Sigmoid colon (tissue), 7 donors: ENCODE measurements at regions of chr9 and their contacts with region 1.

Region 1: DNA sequence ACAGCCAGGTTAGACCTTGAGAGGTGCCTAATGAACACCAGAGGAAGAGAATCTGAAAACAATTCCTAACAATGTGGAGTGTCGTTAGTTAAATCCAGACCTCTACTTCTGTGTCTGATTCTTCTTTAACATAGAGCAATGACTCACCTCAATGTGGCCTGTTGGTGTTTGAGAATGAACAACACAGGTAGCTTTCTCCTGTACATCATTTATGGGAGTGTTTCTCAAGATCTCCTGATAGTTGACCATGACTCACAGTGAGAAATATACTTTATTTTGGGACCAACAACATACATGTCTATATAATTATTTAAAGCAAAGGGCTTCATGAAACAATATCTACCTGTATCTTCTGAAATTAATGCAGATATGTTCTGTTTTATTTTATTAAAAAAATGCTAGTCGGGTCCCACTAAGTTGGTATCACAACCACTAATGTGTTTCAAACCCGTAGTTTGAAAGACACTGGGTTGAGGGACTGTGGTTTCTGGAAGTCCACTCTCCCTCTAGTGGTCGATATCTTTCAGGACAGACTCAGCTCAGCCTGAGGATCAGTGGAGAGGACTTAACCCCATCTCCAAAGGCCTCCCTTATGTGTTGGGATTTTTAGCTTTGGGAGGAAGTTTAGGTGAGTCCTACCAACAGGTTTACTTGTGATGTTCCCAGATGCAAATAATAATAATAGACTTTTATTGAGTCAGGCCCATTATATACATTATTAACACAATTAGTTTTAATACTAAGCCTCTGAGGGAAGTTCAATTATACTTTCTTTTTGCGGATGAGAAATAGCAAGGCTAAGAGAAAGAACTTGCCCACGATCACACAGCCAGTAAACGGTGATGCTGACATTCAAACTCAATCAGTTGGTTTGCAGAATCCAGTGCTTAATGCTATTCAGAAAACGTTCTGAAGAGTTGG is 70.0 kb upstream of the KLF9 start:
- DNase-seq: peak; percentile 80
- H3K4me3 ChIP-seq: no peak overlapping the region
- H3K27ac ChIP-seq: peak overlapping the region; percentile 67 to 98 (median 92)
- H3K4me1 ChIP-seq: peaks cover 4 to 88% (median 76%) of the 10 kb centered on the region in 4 donors
- H3K27me3 ChIP-seq: no peaks in the 10 kb centered on the region
- CTCF ChIP-seq: peak in 3 of 4 experiments; percentile 73 to 85 (median 81)
- EP300 ChIP-seq: peak in 1 of 4 donors; percentile 15
- POLR2A ChIP-seq: no peak

Region 2: GRCh38 chr9:70053864-70054263 is 430.6 kb before region 1 on chr9:
- intact Hi-C with region 1: loop called (anchors 10 kb)
- DNase-seq: peak; percentile 66
- H3K4me3 ChIP-seq: no peak overlapping the region
- H3K27ac ChIP-seq: peak overlapping the region; percentile 87 to 98 (median 93)
- H3K4me1 ChIP-seq: peaks cover 0 to 100% (median 97%) of the 10 kb centered on the region in 4 donors
- H3K27me3 ChIP-seq: no peaks in the 10 kb centered on the region
- CTCF ChIP-seq: no peak
- EP300 ChIP-seq: no peak
- POLR2A ChIP-seq: no peak

Region 3: GRCh38 chr9:70152350-70152749 is 332.1 kb before region 1 on chr9:
- intact Hi-C with region 1: loop called (anchors 5 kb)
- DNase-seq: no peak
- H3K4me3 ChIP-seq: no peak overlapping the region
- H3K27ac ChIP-seq: peak overlapping the region; percentile 24 to 61 (median 37)
- H3K4me1 ChIP-seq: peaks cover 0 to 62% (median 43%) of the 10 kb centered on the region in 4 donors
- H3K27me3 ChIP-seq: no peaks in the 10 kb centered on the region
- CTCF ChIP-seq: no peak
- EP300 ChIP-seq: no peak
- POLR2A ChIP-seq: no peak

Region 4: DNA sequence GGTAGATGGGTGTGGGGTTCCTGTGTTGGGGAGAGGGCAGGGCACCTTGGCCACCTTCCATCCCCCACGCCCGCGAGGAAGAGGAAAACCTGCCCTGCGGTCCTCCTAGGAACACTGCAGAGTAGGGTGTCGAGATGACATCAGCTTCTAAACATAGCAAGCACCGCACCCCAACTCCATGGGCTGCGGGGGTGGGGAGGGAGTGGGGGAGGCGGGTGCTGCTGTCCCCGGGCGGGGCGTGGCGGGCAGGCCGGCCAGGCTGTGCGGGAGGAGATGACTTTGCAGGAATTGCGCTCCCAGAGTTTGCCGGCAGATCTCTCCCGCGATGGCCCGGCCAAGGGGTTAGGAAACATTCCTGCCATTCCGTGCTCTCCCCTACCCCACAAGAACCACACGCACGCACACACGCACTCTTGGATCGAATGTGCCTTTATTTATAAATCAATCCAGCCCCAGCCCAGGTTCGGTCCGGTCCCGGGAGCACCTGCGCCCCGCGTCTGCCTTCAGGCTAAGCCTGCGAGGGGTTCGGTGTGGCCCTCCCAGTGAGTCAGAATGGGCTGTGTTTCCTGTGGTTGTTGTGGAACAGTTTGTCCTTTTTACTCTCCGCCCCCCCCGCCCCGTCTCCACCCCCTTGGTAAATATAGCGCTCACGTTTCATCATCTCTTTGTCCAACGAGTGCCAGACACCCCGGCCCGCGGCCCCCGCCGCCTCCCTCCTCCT is 64.8 kb before region 1 on chr9:
- intact Hi-C with region 1: loop called (anchors 1 kb)
- DNase-seq: peak; percentile 99
- H3K4me3 ChIP-seq: peak overlapping the region; percentile 42 to 56 (median 51)
- H3K27ac ChIP-seq: peak overlapping the region; percentile 98 to 100 (median 99)
- H3K4me1 ChIP-seq: peaks cover 0 to 66% (median 57%) of the 10 kb centered on the region in 4 donors
- H3K27me3 ChIP-seq: no peaks in the 10 kb centered on the region
- CTCF ChIP-seq: peak in 2 of 4 experiments; percentile 6 to 21
- EP300 ChIP-seq: peak; percentile 87 to 99 (median 96)
- POLR2A ChIP-seq: peak in 1 of 2 donors; percentile 94

Region 5: DNA sequence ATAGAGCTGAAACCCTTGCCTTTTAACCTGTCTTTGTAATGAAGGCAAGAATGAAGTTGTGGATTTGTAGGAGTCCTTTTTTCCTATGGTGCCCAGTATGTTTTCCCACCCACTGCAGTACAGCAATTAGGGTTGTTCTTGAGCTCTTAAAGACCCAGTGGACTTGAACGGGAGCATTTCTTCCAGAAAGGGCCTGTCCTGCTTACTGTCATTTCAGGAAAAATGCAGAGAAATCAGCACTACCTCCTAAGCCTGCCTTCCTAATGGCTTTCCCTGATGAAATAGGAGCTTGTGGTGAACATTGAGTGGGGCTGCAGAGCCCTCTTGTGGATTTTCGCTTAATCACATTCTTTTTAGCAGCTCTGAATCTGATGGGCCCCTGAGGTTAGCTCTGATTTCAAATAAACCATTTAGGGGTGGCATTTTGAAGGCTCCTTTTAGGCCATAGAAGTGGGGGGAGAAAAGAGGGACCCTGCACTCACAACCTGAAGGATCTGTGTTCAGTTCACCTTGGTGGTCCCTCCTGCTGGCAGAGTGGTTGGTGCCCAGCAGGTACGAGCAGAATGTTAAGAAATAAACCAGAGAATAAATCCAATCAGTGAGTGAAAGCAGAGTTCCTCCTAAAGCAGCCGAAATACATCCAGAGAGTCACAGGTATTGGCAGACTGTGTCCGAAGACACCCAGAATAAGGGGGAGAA is 118.0 kb after region 1 on chr9:
- intact Hi-C with region 1: loop called (anchors 1 kb)
- DNase-seq: peak; percentile 85
- H3K4me3 ChIP-seq: peak overlapping the region in 3 of 4 donors; percentile 6 to 21 (median 20)
- H3K27ac ChIP-seq: peak overlapping the region; percentile 80 to 98 (median 89)
- H3K4me1 ChIP-seq: peaks cover 0 to 32% (median 28%) of the 10 kb centered on the region in 4 donors
- H3K27me3 ChIP-seq: no peaks in the 10 kb centered on the region
- CTCF ChIP-seq: peak; percentile 76 to 90 (median 82)
- EP300 ChIP-seq: peak in 1 of 4 donors; percentile 17
- POLR2A ChIP-seq: no peak

Region 6: GRCh38 chr9:71090896-71091295 is 606.4 kb after region 1 on chr9:
- intact Hi-C with region 1: no loop called
- DNase-seq: no peak
- H3K4me3 ChIP-seq: no peak overlapping the region
- H3K27ac ChIP-seq: no peak overlapping the region
- H3K4me1 ChIP-seq: no peaks in the 10 kb centered on the region
- H3K27me3 ChIP-seq: no peaks in the 10 kb centered on the region
- CTCF ChIP-seq: no peak
- EP300 ChIP-seq: no peak
- POLR2A ChIP-seq: no peak